Endothelial cell of umbilical vein (primary cell): ENCODE measurements at regions of chr7 and their contacts with region 1.

Region 1: GRCh38 chr7:16982640-16983350 is 101.0 kb upstream of the AGR3 start:
- DNase-seq: peak; percentile 69
- H3K4me3 ChIP-seq: no peak overlapping the region
- H3K27ac ChIP-seq: no peak overlapping the region
- H3K4me1 ChIP-seq: peaks cover 26% of the 10 kb centered on the region
- H3K27me3 ChIP-seq: no peaks in the 10 kb centered on the region
- CTCF ChIP-seq: peak; percentile 75 to 76
- POLR2A ChIP-seq: no peak

Region 2: DNA sequence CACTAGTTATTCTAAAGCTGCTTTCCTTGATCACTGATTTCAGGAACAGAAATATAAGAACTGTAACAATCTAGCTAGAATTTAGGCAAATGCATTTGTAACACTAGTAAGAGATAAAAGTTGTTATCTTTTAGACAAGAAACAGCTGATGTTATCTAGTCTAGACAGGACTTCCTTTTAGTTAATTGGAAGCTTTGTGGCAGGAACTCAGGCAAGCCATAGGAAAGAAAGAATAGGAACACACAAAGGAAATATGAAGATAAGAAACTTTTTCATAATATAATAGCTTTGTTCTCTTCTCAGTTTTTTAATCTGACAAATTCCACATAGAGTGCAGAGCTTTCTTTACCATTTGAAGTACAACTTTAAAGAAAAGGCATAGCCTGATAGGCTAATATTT is 42.0 kb before region 1 on chr7:
- CTCF ChIA-PET with region 1: interaction called, 9 read pairs
- POLR2A ChIA-PET with region 1: no interaction called
- dilution Hi-C with region 1: no loop called
- intact Hi-C with region 1: loop called (anchors 2 kb)
- DNase-seq: peak; percentile 85
- H3K4me3 ChIP-seq: no peak overlapping the region
- H3K27ac ChIP-seq: peak overlapping the region; percentile 75
- H3K4me1 ChIP-seq: peaks cover 31% of the 10 kb centered on the region
- H3K27me3 ChIP-seq: no peaks in the 10 kb centered on the region
- CTCF ChIP-seq: no peak
- POLR2A ChIP-seq: peak; percentile 70

Region 3: GRCh38 chr7:17063045-17063383 is 80.2 kb after region 1 on chr7:
- CTCF ChIA-PET with region 1: interaction called, 38 read pairs
- POLR2A ChIA-PET with region 1: no interaction called
- dilution Hi-C with region 1: no loop called
- intact Hi-C with region 1: loop called (anchors 2 kb)
- DNase-seq: no peak
- H3K4me3 ChIP-seq: no peak overlapping the region
- H3K27ac ChIP-seq: no peak overlapping the region
- H3K4me1 ChIP-seq: peaks cover 16% of the 10 kb centered on the region
- H3K27me3 ChIP-seq: no peaks in the 10 kb centered on the region
- CTCF ChIP-seq: no peak
- POLR2A ChIP-seq: no peak

Region 4: DNA sequence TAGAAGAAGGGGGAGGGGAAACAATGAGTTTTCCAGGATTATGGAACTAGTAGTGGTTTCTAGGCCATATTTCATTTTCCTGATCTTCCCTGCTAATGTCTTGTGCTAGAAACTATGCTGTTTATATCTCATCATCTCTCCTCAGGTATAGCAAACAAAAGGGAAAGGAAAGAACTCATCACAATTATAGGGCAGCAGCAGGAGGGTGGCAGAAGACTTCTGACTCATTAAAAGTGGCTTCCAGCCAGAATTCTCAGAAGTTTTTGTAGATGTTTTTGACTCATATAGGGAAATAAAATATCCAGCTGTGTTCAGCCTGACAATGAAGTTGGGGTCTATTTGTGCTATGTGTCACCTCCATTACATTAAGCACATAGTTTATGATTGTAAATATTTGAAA is 322.1 kb after region 1 on chr7:
- CTCF ChIA-PET with region 1: interaction called, 291 read pairs
- POLR2A ChIA-PET with region 1: no interaction called
- dilution Hi-C with region 1: no loop called
- intact Hi-C with region 1: loop called (anchors 1 kb)
- DNase-seq: peak; percentile 94
- H3K4me3 ChIP-seq: peak overlapping the region in 1 of 3 experiments; percentile 27
- H3K27ac ChIP-seq: peak overlapping the region; percentile 79
- H3K4me1 ChIP-seq: peaks cover 52% of the 10 kb centered on the region
- H3K27me3 ChIP-seq: no peaks in the 10 kb centered on the region
- CTCF ChIP-seq: no peak
- POLR2A ChIP-seq: no peak

Region 5: GRCh38 chr7:17530741-17531417 is 548.1 kb after region 1 on chr7:
- CTCF ChIA-PET with region 1: interaction called, 16 read pairs
- POLR2A ChIA-PET with region 1: no interaction called
- dilution Hi-C with region 1: no loop called
- intact Hi-C with region 1: loop called (anchors 2 kb)
- DNase-seq: peak; percentile 60
- H3K4me3 ChIP-seq: no peak overlapping the region
- H3K27ac ChIP-seq: no peak overlapping the region
- H3K4me1 ChIP-seq: peaks cover 4% of the 10 kb centered on the region
- H3K27me3 ChIP-seq: no peaks in the 10 kb centered on the region
- CTCF ChIP-seq: peak in 1 of 2 donors; percentile 16
- POLR2A ChIP-seq: no peak